IMR-90 (cell line): ENCODE measurements at regions of chr19 and their contacts with region 1.

Region 1: GRCh38 chr19:48624067-48624594 is 4.8 kb downstream of the SPHK2 start:
- DNase-seq: peak; percentile 97
- ATAC-seq: peak; percentile 89
- H3K4me3 ChIP-seq: peak overlapping the region; percentile 49
- H3K27ac ChIP-seq: peak overlapping the region; percentile 84
- H3K4me1 ChIP-seq: peaks cover 7% of the 10 kb centered on the region
- H3K27me3 ChIP-seq: no peaks in the 10 kb centered on the region
- CTCF ChIP-seq: no peak
- POLR2A ChIP-seq: no peak
- RAD21 ChIP-seq: no peak

Region 2: GRCh38 chr19:48372904-48373303 is 251.2 kb before region 1 on chr19:
- CTCF ChIA-PET with region 1: no interaction called
- POLR2A ChIA-PET with region 1: interaction called, 17 read pairs
- dilution Hi-C with region 1: no loop called
- in situ Hi-C with region 1: no loop called
- intact Hi-C with region 1: no loop called
- DNase-seq: no peak
- ATAC-seq: no peak
- H3K4me3 ChIP-seq: no peak overlapping the region
- H3K27ac ChIP-seq: no peak overlapping the region
- H3K4me1 ChIP-seq: no peaks in the 10 kb centered on the region
- H3K27me3 ChIP-seq: peaks cover 2% of the 10 kb centered on the region; the same call in 1 of the 2 replicates
- CTCF ChIP-seq: no peak
- POLR2A ChIP-seq: no peak
- RAD21 ChIP-seq: no peak